CD8-positive, alpha-beta memory T cell (primary cell): ENCODE measurements at regions of chr6 and their contacts with region 1.

Region 1: GRCh38 chr6:148572676-148573335 is 174.0 kb upstream of the UST start:
- DNase-seq: no peak
- H3K4me3 ChIP-seq: no peak overlapping the region
- H3K4me3 Mint-ChIP-seq: no peak overlapping the region
- H3K27ac ChIP-seq: no peak overlapping the region
- H3K27ac Mint-ChIP-seq: no peak overlapping the region
- H3K4me1 ChIP-seq: no peaks in the 10 kb centered on the region
- H3K4me1 Mint-ChIP-seq: no peaks in the 10 kb centered on the region
- H3K27me3 ChIP-seq: no peaks in the 10 kb centered on the region
- H3K27me3 Mint-ChIP-seq: peaks cover 7 to 35% of the 10 kb centered on the region in 2 donors

Region 2: DNA sequence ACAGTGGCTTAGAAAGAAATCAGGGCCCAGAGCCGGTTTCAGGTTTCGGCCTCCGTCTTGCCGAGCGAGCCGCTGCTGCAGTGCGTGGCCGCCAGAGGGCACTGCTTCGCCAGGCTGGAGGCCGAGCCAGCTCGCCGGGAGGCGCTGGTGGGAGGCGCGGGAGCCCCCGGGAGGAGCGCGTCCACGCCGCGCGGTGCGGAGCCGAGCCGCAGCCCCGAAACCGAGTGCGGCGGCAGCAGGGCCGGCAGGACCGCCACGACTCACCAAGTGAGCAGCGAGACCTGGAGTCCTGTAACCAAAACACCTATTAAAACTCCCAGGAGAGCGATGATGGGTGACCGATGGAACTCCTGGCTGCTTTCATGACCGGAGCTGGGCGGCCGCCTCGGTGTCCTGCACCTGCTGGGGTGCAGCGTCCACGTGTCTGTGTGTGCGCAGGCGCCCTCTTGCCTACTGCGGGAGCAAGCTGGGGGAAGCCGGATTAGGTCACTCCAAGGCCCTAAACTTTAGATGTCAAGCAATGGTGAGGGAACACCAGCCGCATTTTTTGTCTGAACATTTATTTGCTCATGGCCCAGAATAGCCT is 12.9 kb before region 1 on chr6:
- CTCF ChIA-PET with region 1: interaction called, 11 read pairs
- POLR2A ChIA-PET with region 1: no interaction called
- DNase-seq: peak; percentile 51 to 78 (median 59)
- H3K4me3 ChIP-seq: peak overlapping the region; percentile 41
- H3K4me3 Mint-ChIP-seq: peak overlapping the region in 3 of 7 donors; percentile 16 to 45 (median 32)
- H3K27ac ChIP-seq: no peak overlapping the region
- H3K27ac Mint-ChIP-seq: no peak overlapping the region
- H3K4me1 ChIP-seq: peaks cover 13% of the 10 kb centered on the region
- H3K4me1 Mint-ChIP-seq: peaks cover 11 to 19% (median 14%) of the 10 kb centered on the region in 3 donors
- H3K27me3 ChIP-seq: no peaks in the 10 kb centered on the region
- H3K27me3 Mint-ChIP-seq: peaks cover 5 to 23% of the 10 kb centered on the region in 2 donors